ENCODE measurements at regions of chrX and their contacts with region 1.

Region 1: DNA sequence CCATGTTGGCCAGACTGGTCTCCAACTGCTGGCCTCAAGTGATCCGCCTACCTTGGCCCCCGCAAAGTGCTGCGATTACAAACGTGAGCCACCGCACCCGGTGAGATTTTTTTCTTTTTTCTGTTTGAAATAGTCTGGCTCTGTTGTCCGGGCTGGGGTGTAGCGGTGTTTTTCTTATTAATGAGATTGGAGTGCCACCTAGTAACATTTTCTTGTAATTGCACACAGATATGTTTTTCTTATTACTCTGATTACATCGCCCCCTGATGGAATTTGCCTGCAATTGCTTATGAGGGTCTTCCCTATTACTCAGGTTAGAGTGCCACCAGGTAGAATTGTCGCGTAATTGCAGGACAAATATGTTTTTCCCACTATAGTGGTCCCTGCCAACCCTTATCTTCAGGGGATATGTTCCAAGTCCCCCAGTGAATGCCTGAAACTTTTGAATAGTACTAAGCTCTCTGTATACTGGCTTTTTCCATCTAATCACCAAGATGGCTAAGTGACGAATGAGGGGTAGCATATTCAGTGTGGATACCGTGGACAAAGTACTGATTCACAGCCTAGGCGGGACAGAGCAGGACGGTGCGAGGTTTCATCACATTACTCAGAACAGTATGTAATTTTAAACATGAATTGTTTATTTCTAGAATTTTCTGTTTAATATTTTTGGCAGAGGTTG is 8.6 kb upstream of the PDHA1 start:
- DNase-seq: peak; percentile 55
- ATAC-seq: no peak
- H3K4me3 ChIP-seq: no peak overlapping the region
- H3K27ac ChIP-seq: no peak overlapping the region
- H3K4me1 ChIP-seq: no peaks in the 10 kb centered on the region
- H3K27me3 ChIP-seq: no peaks in the 10 kb centered on the region
- CTCF ChIP-seq: peak; percentile 63

Region 2: DNA sequence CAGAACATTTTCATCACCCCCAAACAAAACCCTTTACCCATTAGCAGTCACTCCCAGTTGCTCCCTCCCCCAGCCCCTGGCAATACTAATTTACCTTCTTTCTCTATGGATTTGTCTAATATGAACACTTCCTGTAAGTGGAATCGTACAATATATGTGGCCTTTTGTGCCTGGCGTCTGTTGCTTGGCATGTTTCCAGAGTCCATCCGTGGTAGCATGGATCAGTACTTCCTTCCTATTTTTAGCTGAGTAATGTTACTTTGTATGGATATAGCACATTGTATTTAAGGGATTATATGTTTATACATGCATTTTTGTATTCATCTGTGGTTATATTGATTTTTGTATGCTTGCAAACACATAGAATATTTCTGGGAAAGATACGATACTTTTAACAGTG is 579.4 kb before region 1 on chrX:
- CTCF ChIA-PET with region 1: interaction called, 12 read pairs
- POLR2A ChIA-PET with region 1: no interaction called
- intact Hi-C with region 1: no loop called
- DNase-seq: no peak
- ATAC-seq: no peak
- H3K4me3 ChIP-seq: no peak overlapping the region
- H3K27ac ChIP-seq: no peak overlapping the region
- H3K4me1 ChIP-seq: no peaks in the 10 kb centered on the region
- H3K27me3 ChIP-seq: 0 out of 2 replicates have a peak, but pooled peaks cover 3% of the 10 kb centered on the region
- CTCF ChIP-seq: no peak

Region 3: GRCh38 chrX:18938710-18939109 is 396.4 kb before region 1 on chrX:
- CTCF ChIA-PET with region 1: interaction called, 12 read pairs
- POLR2A ChIA-PET with region 1: no interaction called
- intact Hi-C with region 1: no loop called
- DNase-seq: peak; percentile 80
- ATAC-seq: peak; percentile 94
- H3K4me3 ChIP-seq: no peak overlapping the region
- H3K27ac ChIP-seq: peak overlapping the region; percentile 44
- H3K4me1 ChIP-seq: peaks cover 22% of the 10 kb centered on the region
- H3K27me3 ChIP-seq: no peaks in the 10 kb centered on the region
- CTCF ChIP-seq: no peak

Region 4: DNA sequence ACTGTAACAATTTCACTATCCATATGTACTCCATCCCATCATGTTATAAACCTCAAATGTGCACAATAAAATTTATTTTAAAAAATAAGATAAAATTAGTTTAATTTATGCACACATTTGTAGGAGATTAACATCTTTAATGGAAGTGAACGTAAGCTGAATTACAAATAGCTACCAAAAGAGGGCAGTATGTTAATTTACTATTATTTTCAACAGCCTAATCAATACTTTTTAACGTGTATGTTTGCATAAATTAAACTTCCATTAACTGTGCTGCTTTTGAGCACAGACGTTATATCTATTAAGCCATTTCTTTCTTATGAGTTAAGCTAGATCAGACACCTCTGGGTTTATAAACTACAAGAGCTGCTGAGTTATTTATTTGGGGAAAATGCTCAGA is 294.7 kb before region 1 on chrX:
- CTCF ChIA-PET with region 1: interaction called, 8 read pairs
- POLR2A ChIA-PET with region 1: no interaction called
- intact Hi-C with region 1: loop called (anchors 2 kb)
- DNase-seq: peak; percentile 40
- ATAC-seq: no peak
- H3K4me3 ChIP-seq: no peak overlapping the region
- H3K27ac ChIP-seq: no peak overlapping the region
- H3K4me1 ChIP-seq: no peaks in the 10 kb centered on the region
- H3K27me3 ChIP-seq: no peaks in the 10 kb centered on the region
- CTCF ChIP-seq: peak; percentile 61

Region 5: DNA sequence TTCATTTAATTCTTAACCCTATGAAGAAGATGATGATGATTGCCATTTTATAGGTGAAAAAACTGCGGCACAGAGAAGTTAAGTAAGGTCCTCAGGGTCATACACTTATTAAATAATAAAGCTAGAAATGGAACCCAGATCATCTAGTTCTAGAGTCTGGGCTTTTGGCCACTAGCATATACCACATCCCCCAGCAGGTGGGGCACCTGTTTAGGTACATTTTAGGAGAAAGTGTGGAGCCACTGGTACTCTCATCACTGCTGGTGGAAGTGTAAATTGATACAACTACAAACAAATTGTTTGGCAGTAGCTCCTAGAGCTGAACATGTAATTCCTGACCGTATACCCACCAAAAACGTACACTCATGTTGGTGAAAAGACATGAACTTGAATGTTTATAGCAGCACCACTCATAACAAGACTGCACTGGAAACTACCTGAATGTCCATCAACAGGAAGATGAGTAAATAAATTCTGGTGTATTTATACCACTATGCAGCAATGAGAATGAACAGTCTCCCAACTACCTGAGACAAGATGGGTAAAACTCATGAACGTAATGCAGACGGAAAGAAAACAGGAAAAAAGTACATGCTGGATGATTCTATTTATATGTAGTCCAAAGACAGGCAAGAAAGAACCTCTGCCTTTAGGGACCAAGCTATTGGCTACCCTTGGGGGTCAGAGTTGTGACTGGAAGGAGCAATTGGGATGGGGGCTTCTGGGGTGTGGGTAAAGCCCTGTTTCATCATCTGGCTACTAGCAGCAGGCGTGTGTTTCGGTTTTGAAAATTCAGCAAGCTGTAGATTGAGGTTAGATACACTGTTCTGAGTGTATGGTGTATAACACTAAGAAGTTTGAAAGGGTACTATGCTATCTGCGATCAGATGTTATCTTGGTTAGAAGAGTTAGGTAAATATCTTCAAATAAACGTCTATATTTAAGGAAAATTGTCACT is 140.5 kb before region 1 on chrX:
- CTCF ChIA-PET with region 1: no interaction called
- POLR2A ChIA-PET with region 1: no interaction called
- intact Hi-C with region 1: loop called (anchors 1 kb)
- DNase-seq: peak; percentile 35
- ATAC-seq: peak; percentile 51
- H3K4me3 ChIP-seq: no peak overlapping the region
- H3K27ac ChIP-seq: no peak overlapping the region
- H3K4me1 ChIP-seq: no peaks in the 10 kb centered on the region
- H3K27me3 ChIP-seq: no peaks in the 10 kb centered on the region
- CTCF ChIP-seq: peak; percentile 51

Measured in PC-3 (cell line).